ENCODE measurements at regions of chr6 and their contacts with region 1.

Region 1: DNA sequence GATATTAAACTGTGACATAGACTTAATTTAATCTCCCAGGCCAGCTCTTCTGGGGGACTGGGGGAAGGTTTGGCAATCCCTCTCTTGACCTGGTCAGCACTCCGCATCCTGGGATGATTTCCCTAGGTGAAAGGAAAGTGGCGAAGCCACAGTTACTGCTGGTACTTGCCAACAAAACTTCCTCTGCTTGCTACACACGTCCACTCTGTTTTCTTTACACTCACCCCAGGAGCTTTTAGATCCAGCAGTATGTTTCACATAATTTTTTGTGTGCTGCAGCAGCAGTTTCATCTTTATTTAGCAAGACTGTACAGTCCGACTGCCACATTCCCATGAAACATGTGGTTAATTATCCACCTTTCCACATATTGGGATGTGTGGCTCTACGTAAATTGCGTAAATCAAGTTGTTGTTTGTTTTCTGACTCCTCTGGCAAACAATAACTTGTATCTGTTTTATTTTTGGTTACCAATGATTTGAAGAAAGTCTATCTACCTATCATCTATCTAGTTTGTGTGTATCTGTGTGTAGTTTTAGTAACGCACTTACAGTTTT is 284.0 kb downstream of the PHF3 start:
- DNase-seq: no peak
- H3K4me3 ChIP-seq: no peak overlapping the region
- H3K27ac ChIP-seq: no peak overlapping the region
- H3K4me1 ChIP-seq: no peaks in the 10 kb centered on the region
- H3K27me3 ChIP-seq: no peaks in the 10 kb centered on the region
- CTCF ChIP-seq: no peak
- POLR2A ChIP-seq: no peak

Region 2: DNA sequence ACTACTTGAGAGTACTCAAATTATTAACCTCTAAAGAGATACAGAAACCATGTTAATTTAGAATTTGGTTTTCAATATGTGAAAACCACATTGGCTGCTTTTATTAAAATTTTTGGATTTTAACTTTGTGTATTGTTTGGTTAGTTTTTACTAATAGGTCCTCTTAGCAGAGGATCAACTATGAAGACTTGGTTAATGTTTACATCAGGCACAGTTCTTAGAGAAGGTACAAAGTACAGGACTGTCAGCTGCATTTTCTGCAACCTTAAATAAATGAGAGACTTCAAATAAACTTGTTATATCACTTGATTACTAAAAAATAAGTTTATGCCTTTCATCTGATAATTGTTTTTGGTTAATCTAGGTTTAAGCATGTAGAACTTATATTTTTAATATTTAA is 194.9 kb before region 1 on chr6:
- intact Hi-C with region 1: no loop called
- DNase-seq: no peak
- H3K4me3 ChIP-seq: no peak overlapping the region
- H3K27ac ChIP-seq: no peak overlapping the region
- H3K4me1 ChIP-seq: no peaks in the 10 kb centered on the region
- H3K27me3 ChIP-seq: no peaks in the 10 kb centered on the region
- CTCF ChIP-seq: no peak
- POLR2A ChIP-seq: no peak

Region 3: GRCh38 chr6:64330694-64331307 is 411.2 kb after region 1 on chr6:
- intact Hi-C with region 1: loop called (anchors 2 kb)
- DNase-seq: peak; percentile 81 to 90
- H3K4me3 ChIP-seq: no peak overlapping the region
- H3K27ac ChIP-seq: no peak overlapping the region
- H3K4me1 ChIP-seq: no peaks in the 10 kb centered on the region
- H3K27me3 ChIP-seq: no peaks in the 10 kb centered on the region
- CTCF ChIP-seq: peak; percentile 53 to 78 (median 57)
- POLR2A ChIP-seq: no peak